Activated CD4-positive, alpha-beta memory T cell treated with anti-CD3 and anti-CD28 coated beads for 36 hours (primary cell): ENCODE measurements at regions of chr2 and their contacts with region 1.

Region 1: DNA sequence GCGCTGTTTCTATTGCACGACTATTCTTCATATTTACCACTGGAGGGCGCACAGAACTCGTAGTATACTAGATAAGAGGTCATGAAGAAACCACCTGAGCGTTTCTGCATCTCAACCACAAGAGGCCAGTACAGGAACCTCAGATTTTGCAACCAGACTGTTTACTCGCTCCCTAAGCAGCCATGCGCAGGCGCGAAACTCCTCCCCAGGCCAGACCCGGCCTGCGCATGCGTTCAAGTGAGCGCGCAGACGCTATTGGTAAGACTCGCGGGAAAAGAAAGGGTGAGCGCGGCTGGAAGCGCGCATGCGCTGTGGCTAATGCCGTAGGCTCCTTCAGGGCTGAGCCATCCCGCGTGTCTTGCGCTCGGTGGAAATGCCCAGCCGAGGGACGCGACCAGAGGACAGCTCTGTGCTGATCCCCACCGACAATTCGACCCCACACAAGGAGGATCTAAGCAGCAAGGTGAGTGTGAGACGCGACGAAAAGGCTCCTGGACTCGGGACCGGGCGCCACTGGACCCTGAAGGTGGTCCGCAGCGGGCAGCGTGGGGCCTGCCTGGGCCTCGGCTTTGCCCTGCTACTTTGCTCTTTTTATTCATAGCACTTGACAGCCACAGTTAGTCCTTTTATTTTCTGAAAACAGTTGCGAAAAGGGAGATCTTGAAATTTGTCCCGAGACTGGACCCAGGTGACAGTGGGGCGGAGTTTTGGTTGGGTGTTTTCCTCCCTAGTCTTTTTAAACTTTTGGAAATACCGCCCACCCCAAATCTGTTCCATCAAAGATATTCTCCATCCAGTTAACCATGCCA is at the start of gene ASNSD1:
- DNase-seq: peak; percentile 98
- H3K4me3 Mint-ChIP-seq: no peak within 1 kb of the TSS
- H3K27ac Mint-ChIP-seq: no peak within 1 kb of the TSS
- H3K4me1 Mint-ChIP-seq: peaks cover 51% of the 10 kb centered on the region
- H3K27me3 Mint-ChIP-seq: no peaks in the 10 kb centered on the region
- total RNA-seq, gene ASNSD1: 44.5 to 47.0 TPM

Region 2: GRCh38 chr2:189440947-189441708 is 220.2 kb before region 1 on chr2 and contains the start of gene WDR75:
- CTCF ChIA-PET with region 1: no interaction called
- POLR2A ChIA-PET with region 1: interaction called, 3 read pairs
- intact Hi-C with region 1: loop called (anchors 1 kb)
- DNase-seq: peak; percentile 94
- H3K4me3 Mint-ChIP-seq: no peak within 1 kb of the TSS
- H3K27ac Mint-ChIP-seq: peak within 1 kb of the TSS; percentile 99
- H3K4me1 Mint-ChIP-seq: peaks cover 11% of the 10 kb centered on the region
- H3K27me3 Mint-ChIP-seq: no peaks in the 10 kb centered on the region
- total RNA-seq, gene WDR75: 66.4 to 68.8 TPM

Region 3: DNA sequence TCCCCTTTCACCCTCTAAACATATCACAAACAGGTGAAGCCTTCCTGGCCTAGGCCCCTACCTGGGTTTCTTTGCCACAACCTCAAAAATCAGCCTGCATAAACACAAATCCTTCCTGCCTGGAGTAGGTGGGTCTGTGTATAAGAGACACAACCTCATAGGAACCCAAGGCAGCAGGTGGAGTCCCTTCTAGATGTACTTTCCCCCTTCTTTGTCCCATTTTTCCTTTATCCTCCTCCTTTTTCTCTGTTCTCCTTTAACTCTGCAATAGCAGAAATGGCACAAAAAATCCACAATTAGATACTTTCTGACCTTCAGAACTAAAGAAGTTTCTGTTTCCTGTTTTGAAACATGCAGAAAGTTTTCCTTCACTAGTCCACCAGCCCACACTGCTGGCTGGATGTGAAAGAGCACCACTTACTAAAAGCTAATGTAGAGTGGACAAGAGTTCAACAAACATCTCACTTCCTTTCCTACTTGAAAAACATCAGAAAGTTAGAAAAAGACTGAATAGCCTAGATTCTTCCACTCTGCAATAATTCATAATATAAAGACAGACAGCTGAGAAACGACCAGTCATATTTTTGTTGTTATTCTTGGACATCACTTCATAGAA is 91.9 kb before region 1 on chr2:
- CTCF ChIA-PET with region 1: no interaction called
- POLR2A ChIA-PET with region 1: no interaction called
- intact Hi-C with region 1: no loop called
- DNase-seq: no peak
- H3K4me3 Mint-ChIP-seq: no peak overlapping the region
- H3K27ac Mint-ChIP-seq: peak overlapping the region; percentile 71
- H3K4me1 Mint-ChIP-seq: peaks cover 35% of the 10 kb centered on the region
- H3K27me3 Mint-ChIP-seq: no peaks in the 10 kb centered on the region

Region 4: GRCh38 chr2:189674374-189675112 is 13.2 kb after region 1 on chr2 and contains the start of gene ANKAR:
- CTCF ChIA-PET with region 1: interaction called, 111 read pairs
- POLR2A ChIA-PET with region 1: interaction called, 16 read pairs
- intact Hi-C with region 1: loop called (anchors 1 kb)
- DNase-seq: peak; percentile 86
- H3K4me3 Mint-ChIP-seq: peak within 1 kb of the TSS; percentile 92
- H3K27ac Mint-ChIP-seq: peak within 1 kb of the TSS; percentile 96
- H3K4me1 Mint-ChIP-seq: peaks cover 30% of the 10 kb centered on the region
- H3K27me3 Mint-ChIP-seq: no peaks in the 10 kb centered on the region
- total RNA-seq, gene ANKAR: 3.4 to 4.2 TPM

Region 5: GRCh38 chr2:189751080-189751658 is 89.8 kb after region 1 on chr2:
- CTCF ChIA-PET with region 1: interaction called, 11 read pairs
- POLR2A ChIA-PET with region 1: no interaction called
- intact Hi-C with region 1: no loop called
- DNase-seq: peak; percentile 45
- H3K4me3 Mint-ChIP-seq: no peak overlapping the region
- H3K27ac Mint-ChIP-seq: no peak overlapping the region
- H3K4me1 Mint-ChIP-seq: no peaks in the 10 kb centered on the region
- H3K27me3 Mint-ChIP-seq: no peaks in the 10 kb centered on the region

Region 6: GRCh38 chr2:189899101-189899500 is 237.7 kb after region 1 on chr2:
- CTCF ChIA-PET with region 1: no interaction called
- POLR2A ChIA-PET with region 1: no interaction called
- intact Hi-C with region 1: no loop called
- DNase-seq: no peak
- H3K4me3 Mint-ChIP-seq: no peak overlapping the region
- H3K27ac Mint-ChIP-seq: no peak overlapping the region
- H3K4me1 Mint-ChIP-seq: no peaks in the 10 kb centered on the region
- H3K27me3 Mint-ChIP-seq: no peaks in the 10 kb centered on the region

Region 7: GRCh38 chr2:190069936-190070696 is 408.8 kb after region 1 on chr2:
- CTCF ChIA-PET with region 1: interaction called, 4 read pairs
- POLR2A ChIA-PET with region 1: no interaction called
- intact Hi-C with region 1: loop called (anchors 1 kb)
- DNase-seq: no peak
- H3K4me3 Mint-ChIP-seq: no peak overlapping the region
- H3K27ac Mint-ChIP-seq: no peak overlapping the region
- H3K4me1 Mint-ChIP-seq: no peaks in the 10 kb centered on the region
- H3K27me3 Mint-ChIP-seq: no peaks in the 10 kb centered on the region

Region 8: GRCh38 chr2:190376591-190377245 is 715.4 kb after region 1 on chr2:
- CTCF ChIA-PET with region 1: no interaction called
- POLR2A ChIA-PET with region 1: no interaction called
- intact Hi-C with region 1: loop called (anchors 1 kb)
- DNase-seq: no peak
- H3K4me3 Mint-ChIP-seq: no peak overlapping the region
- H3K27ac Mint-ChIP-seq: no peak overlapping the region
- H3K4me1 Mint-ChIP-seq: no peaks in the 10 kb centered on the region
- H3K27me3 Mint-ChIP-seq: no peaks in the 10 kb centered on the region